ENCODE measurements at regions of chr17 and their contacts with region 1.

Region 1: GRCh38 chr17:48101012-48101720 is at the start of gene CBX1:
- DNase-seq: peak; percentile 94 to 98 (median 96)
- ATAC-seq: peak; percentile 97 to 99 (median 99)
- H3K4me3 ChIP-seq: peak within 1 kb of the TSS; percentile 76 to 98 (median 90)
- H3K27ac ChIP-seq: peak within 1 kb of the TSS; percentile 26 to 94 (median 90)
- H3K4me1 ChIP-seq: peaks cover 0 to 26% (median 10%) of the 10 kb centered on the region in 12 donors
- H3K27me3 ChIP-seq: no peaks in the 10 kb centered on the region
- CTCF ChIP-seq: no peak
- POLR2A ChIP-seq: peak in 1 of 2 donors; percentile 72
- total RNA-seq, gene CBX1: 28.5 to 43.8 (median 37.9) TPM

Region 2: GRCh38 chr17:47745037-47745380 is 356.2 kb before region 1 on chr17:
- intact Hi-C with region 1: no loop called
- DNase-seq: no peak
- ATAC-seq: peak in 2 of 4 donors; percentile 42
- H3K4me3 ChIP-seq: no peak overlapping the region
- H3K27ac ChIP-seq: no peak overlapping the region
- H3K4me1 ChIP-seq: peaks cover 0 to 9% (median 0%) of the 10 kb centered on the region in 12 donors
- H3K27me3 ChIP-seq: peaks cover 4 to 71% (median 26%) of the 10 kb centered on the region in 9 donors
- CTCF ChIP-seq: peak in 2 of 12 donors; percentile 13
- POLR2A ChIP-seq: no peak

Region 3: GRCh38 chr17:47967607-47968243 is 133.4 kb before region 1 on chr17:
- intact Hi-C with region 1: no loop called
- DNase-seq: no peak
- ATAC-seq: no peak
- H3K4me3 ChIP-seq: no peak overlapping the region
- H3K27ac ChIP-seq: no peak overlapping the region
- H3K4me1 ChIP-seq: peaks cover 0 to 20% (median 14%) of the 10 kb centered on the region in 12 donors
- H3K27me3 ChIP-seq: no peaks in the 10 kb centered on the region
- CTCF ChIP-seq: no peak
- POLR2A ChIP-seq: no peak

Region 4: GRCh38 chr17:48052956-48053757 is 48.0 kb before region 1 on chr17:
- intact Hi-C with region 1: loop called in 1 of 10 experiments (anchors 1 kb)
- DNase-seq: peak; percentile 86 to 94 (median 91)
- ATAC-seq: peak; percentile 56 to 70 (median 66)
- H3K4me3 ChIP-seq: peak overlapping the region; percentile 9 to 96 (median 85)
- H3K27ac ChIP-seq: peak overlapping the region; percentile 96 to 100 (median 99)
- H3K4me1 ChIP-seq: peaks cover 12 to 91% (median 76%) of the 10 kb centered on the region in 12 donors
- H3K27me3 ChIP-seq: no peaks in the 10 kb centered on the region
- CTCF ChIP-seq: peak in 1 of 12 donors; percentile 11
- POLR2A ChIP-seq: no peak

Region 5: GRCh38 chr17:48202959-48203358 is 101.8 kb after region 1 on chr17:
- intact Hi-C with region 1: no loop called
- DNase-seq: no peak
- ATAC-seq: no peak
- H3K4me3 ChIP-seq: no peak overlapping the region
- H3K27ac ChIP-seq: no peak overlapping the region
- H3K4me1 ChIP-seq: no peaks in the 10 kb centered on the region
- H3K27me3 ChIP-seq: peaks cover 0 to 34% (median 3%) of the 10 kb centered on the region in 9 donors
- CTCF ChIP-seq: no peak
- POLR2A ChIP-seq: no peak